Psoas muscle (tissue), 8 donors: ENCODE measurements at regions of chr10 and their contacts with region 1.

Region 1: GRCh38 chr10:60816628-60817397 is 38.5 kb downstream of the CDK1 start:
- DNase-seq: no peak
- ATAC-seq: peak; percentile 83 to 96 (median 90)
- H3K4me3 ChIP-seq: no peak overlapping the region
- H3K27ac ChIP-seq: peak overlapping the region; percentile 17
- H3K4me1 ChIP-seq: peaks cover 29% of the 10 kb centered on the region
- H3K27me3 ChIP-seq: no peaks in the 10 kb centered on the region
- CTCF ChIP-seq: peak; percentile 82

Region 2: GRCh38 chr10:60883187-60883586 is 66.4 kb after region 1 on chr10:
- intact Hi-C with region 1: loop called in 1 of 2 experiments (anchors 5 kb)
- DNase-seq: no peak
- ATAC-seq: peak in 2 of 4 donors; percentile 44 to 51
- H3K4me3 ChIP-seq: no peak overlapping the region
- H3K27ac ChIP-seq: peak overlapping the region; percentile 66
- H3K4me1 ChIP-seq: peaks cover 41% of the 10 kb centered on the region
- H3K27me3 ChIP-seq: no peaks in the 10 kb centered on the region
- CTCF ChIP-seq: peak; percentile 34

Region 3: GRCh38 chr10:61140765-61141392 is 324.1 kb after region 1 on chr10:
- intact Hi-C with region 1: loop called in 1 of 2 experiments (anchors 5 kb)
- DNase-seq: no peak
- ATAC-seq: peak; percentile 48 to 85 (median 66)
- H3K4me3 ChIP-seq: peak overlapping the region; percentile 21
- H3K27ac ChIP-seq: no peak overlapping the region
- H3K4me1 ChIP-seq: peaks cover 3% of the 10 kb centered on the region
- H3K27me3 ChIP-seq: no peaks in the 10 kb centered on the region
- CTCF ChIP-seq: peak; percentile 85

Region 4: DNA sequence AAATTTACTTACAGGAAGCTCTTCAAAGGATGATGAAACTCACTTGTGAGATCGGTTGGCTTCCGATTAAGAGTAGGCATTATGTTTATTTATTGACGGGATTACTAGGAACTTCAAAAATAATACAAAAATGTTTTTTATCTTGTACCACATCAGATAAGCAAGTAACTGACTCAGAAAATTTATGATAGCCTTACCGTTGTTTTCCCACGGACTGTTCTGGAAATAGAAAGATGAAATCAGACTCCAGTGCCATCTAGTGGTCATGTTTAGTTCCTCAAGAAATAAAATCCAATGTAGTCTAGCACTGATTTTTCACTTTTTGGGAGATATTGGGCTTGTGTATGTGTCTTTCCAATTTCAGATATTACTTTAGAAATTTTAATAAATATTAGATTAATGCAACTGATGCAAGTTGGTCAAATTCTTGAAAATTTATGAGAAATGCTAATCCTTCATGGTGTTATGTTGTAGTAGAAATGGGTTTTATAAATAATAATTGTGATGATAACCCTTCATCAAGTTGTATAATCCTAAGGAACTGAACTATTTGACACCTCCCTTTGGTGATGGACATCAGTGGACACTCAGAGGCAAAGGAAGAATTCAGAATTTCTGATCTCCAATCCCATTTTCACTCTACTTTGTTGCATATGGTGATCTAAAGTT is 467.5 kb after region 1 on chr10:
- intact Hi-C with region 1: loop called (anchors 2 to 5 kb)
- DNase-seq: no peak
- ATAC-seq: peak; percentile 66 to 86 (median 72)
- H3K4me3 ChIP-seq: peak overlapping the region; percentile 29
- H3K27ac ChIP-seq: peak overlapping the region; percentile 20
- H3K4me1 ChIP-seq: peaks cover 6% of the 10 kb centered on the region
- H3K27me3 ChIP-seq: no peaks in the 10 kb centered on the region
- CTCF ChIP-seq: peak; percentile 87

Region 5: DNA sequence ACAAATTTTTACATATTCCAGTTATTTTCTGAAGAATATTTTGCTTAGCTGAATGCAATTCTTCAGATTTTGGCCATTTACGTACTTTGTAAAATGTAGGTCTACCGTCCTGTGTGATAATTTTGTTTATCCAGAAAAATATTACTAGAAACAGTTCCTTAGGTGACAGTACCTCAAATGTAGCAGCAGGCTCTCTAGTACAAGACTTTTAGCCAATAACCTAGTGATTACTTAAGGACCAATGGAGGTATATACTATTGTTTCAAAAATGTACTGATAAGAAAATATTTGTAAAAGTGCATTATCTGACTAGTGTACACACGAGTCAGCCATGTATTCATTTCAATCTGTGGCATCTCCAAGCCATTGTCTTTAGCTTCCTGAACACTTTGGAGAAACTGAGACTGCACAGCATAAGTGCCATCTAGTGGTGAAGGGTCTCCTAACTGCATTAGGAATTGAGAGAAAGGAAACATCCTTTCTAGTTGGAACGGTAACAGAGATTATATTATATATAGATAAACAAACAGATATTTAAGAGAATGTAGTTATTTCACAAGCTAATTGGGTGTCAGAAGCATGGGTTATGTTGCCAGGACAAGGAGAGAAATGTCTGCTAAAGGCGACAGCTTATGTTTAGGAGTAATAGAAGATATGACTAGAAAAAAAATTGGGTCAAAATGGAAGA is 1428.1 kb after region 1 on chr10:
- intact Hi-C with region 1: loop called in 1 of 2 experiments (anchors 10 kb)
- DNase-seq: no peak
- ATAC-seq: peak; percentile 70 to 84 (median 74)
- H3K4me3 ChIP-seq: no peak overlapping the region
- H3K27ac ChIP-seq: no peak overlapping the region
- H3K4me1 ChIP-seq: peaks cover 10% of the 10 kb centered on the region
- H3K27me3 ChIP-seq: no peaks in the 10 kb centered on the region
- CTCF ChIP-seq: peak; percentile 90